Calu3 (cell line): ENCODE measurements at regions of chr1 and their contacts with region 1.

Region 1: DNA sequence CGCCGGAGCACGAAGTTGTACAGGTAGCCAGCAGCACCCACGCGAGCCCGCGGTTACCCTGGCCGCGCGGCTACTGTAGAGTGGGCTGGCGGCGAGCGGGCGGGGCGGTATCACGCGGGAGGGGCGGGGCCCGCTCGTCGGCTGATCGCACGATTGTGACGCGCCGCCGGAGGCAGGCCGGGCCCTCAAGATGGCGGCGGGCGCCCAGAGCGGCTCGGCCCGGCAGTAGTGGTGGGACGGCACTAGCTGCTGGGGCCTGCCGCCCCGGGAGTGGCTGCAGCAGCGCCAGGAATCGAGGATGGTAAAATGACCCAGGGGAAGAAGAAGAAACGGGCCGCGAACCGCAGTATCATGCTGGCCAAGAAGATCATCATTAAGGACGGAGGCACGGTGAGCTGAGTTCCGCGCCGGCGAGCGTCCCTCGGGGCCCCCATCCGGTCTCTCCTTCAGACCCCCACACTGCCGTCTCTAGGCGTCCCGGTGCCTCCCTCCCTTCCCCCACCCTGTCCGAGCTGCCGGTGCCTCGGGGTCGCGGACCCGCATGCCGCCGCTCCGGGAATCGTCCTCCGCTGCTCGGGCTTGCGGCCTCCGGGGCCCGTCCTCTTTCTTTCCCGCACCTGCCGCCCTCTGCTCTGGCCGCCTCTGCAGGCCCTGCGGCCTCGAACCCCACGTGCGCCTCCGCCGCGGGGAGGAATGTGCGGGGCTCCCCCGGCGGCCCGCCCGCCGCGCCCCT is 68.3 kb downstream of the SLC35A3 start:
- DNase-seq: peak; percentile 85
- H3K4me3 Mint-ChIP-seq: peak overlapping the region; percentile 90
- H3K27ac Mint-ChIP-seq: peak overlapping the region; percentile 94
- H3K4me1 Mint-ChIP-seq: no peaks in the 10 kb centered on the region
- H3K27me3 Mint-ChIP-seq: no peaks in the 10 kb centered on the region
- CTCF ChIP-seq: no peak

Region 2: GRCh38 chr1:99992760-99993467 is 45.2 kb before region 1 on chr1:
- CTCF ChIA-PET with region 1: no interaction called
- intact Hi-C with region 1: no loop called
- DNase-seq: no peak
- H3K4me3 Mint-ChIP-seq: no peak overlapping the region
- H3K27ac Mint-ChIP-seq: no peak overlapping the region
- H3K4me1 Mint-ChIP-seq: no peaks in the 10 kb centered on the region
- H3K27me3 Mint-ChIP-seq: no peaks in the 10 kb centered on the region
- CTCF ChIP-seq: no peak

Region 3: DNA sequence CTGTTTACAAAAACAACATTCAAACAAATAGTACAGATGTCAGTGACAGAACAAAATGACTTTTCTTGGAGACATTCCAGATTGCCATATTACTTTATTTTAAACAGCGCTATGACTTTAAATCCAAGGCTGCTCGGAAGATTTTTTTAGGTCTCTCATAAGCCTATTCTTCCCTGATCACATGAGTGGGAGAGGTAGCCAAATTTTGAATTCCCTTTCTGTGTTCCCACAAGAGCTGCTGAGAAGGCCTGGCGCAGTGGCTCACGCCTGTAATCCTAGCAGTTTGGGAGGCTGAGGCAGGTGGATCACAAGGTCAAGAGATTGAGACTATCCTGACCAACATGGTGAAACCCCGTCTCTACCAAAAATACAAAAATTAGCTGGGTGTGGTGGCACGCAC is 14.6 kb before region 1 on chr1:
- CTCF ChIA-PET with region 1: no interaction called
- intact Hi-C with region 1: no loop called
- DNase-seq: no peak
- H3K4me3 Mint-ChIP-seq: no peak overlapping the region
- H3K27ac Mint-ChIP-seq: no peak overlapping the region
- H3K4me1 Mint-ChIP-seq: no peaks in the 10 kb centered on the region
- H3K27me3 Mint-ChIP-seq: no peaks in the 10 kb centered on the region
- CTCF ChIP-seq: no peak

Region 4: DNA sequence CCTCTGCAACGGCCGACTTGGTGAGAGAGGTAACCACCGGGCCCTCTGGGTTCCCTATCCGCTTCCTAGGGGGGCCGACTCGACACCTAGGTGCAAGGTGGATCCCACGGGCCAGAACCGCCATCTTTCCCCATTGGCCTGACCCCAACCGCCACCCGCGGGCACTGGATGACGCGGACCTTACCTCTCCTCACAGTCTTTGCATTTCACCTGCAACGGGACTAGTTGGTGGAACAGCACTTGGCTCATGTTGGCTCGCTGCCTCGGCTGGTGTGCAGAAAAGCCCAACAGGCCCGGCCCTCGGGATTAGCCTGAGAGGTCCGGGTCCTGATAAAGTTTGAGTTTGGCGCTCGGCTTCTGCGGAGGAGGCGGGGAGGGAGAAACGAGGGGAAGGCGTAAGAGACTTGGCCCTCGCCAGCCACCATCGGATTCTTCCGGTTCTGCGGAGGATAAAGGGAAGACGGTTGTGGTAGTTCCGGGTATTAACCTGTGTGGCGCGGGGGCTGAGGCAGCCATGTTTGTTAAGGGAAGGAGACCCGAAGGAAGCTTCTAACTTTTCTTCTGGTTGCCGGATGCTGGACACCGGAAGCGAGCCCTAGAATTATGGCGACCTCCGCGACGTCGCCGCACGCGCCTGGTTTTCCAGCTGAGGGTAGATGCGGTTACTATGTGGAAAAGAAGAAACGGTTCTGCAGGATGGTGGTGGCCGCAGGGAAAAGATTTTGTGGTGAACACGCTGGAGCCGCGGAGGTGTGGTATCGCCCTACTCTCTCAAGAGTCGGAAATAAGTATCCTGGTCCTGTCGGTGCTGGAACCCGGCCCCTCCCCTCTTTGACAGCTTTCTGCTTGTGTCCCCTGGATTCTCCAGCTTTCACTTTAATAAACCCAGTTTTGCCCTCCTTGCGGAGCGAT is 94.7 kb after region 1 on chr1 and contains the starts of genes SASS6 and TRMT13:
- CTCF ChIA-PET with region 1: no interaction called
- intact Hi-C with region 1: loop called (anchors 5 kb)
- DNase-seq: peak; percentile 88
- H3K4me3 Mint-ChIP-seq: peak within 1 kb of the TSS; percentile 93
- H3K27ac Mint-ChIP-seq: peak within 1 kb of the TSS; percentile 62
- H3K4me1 Mint-ChIP-seq: peaks cover 8% of the 10 kb centered on the region
- H3K27me3 Mint-ChIP-seq: no peaks in the 10 kb centered on the region
- CTCF ChIP-seq: no peak
- total RNA-seq, gene SASS6: 8.2 and 8.7 TPM in 2 replicates
- total RNA-seq, gene TRMT13: 18.9 and 21.4 TPM in 2 replicates